Activated naive CD4-positive, alpha-beta T cell treated with anti-CD3 and anti-CD28 coated beads for 36 hours (primary cell): ENCODE measurements at regions of chr19 and their contacts with region 1.

Region 1: DNA sequence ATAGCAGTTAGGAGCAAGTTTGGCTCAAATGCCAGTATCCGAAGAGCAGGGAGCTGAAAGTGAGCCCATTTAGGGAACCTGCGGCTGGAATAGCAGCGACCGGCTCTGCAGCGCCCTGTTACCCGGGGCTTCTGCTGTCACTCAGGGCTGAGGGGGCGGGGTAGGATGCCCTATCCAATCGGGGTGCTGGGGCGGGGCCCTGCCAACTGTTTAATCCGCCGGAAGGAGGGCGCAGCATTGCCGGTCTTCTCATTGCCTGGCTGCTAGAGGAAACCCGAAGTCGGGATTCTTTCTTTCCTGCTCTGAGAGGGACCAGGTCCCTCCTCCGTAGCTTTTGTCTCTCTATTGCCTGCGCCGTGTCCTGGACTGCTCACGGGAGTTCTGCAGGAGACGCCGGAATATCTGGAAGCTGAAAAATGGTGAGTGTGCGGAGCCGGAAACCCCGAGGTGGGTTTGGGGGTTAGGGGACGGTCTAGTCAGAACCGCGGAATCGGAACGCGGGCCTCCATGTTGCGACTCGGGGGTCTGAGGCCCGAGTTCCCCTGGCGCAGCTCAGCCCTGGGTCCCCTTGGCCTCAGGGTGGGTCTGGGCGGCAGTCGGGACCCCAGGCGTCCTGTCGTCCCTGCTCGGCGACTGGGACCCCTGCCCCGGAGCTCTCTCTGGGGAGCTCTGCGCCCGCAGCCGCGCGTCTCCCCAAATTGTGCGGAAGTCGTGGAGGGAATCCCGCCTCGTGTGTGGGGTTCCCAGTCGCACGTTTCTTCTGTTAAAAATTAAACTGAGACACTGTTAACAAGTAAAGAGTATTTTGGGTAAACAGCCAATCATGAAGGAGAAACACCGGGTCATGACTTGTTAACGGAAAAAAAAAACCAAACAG is 22.8 kb downstream of the ZNF763 start:
- DNase-seq: peak; percentile 97
- H3K4me3 Mint-ChIP-seq: peak overlapping the region; percentile 92
- H3K27ac Mint-ChIP-seq: peak overlapping the region; percentile 92
- H3K4me1 Mint-ChIP-seq: peaks cover 22% of the 10 kb centered on the region
- H3K27me3 Mint-ChIP-seq: no peaks in the 10 kb centered on the region

Region 2: GRCh38 chr19:11798391-11799330 is 189.0 kb before region 1 on chr19 and contains the start of gene ZNF491:
- CTCF ChIA-PET with region 1: interaction called, 19 read pairs
- intact Hi-C with region 1: loop called (anchors 1 kb)
- DNase-seq: peak; percentile 95
- H3K4me3 Mint-ChIP-seq: peak within 1 kb of the TSS; percentile 84
- H3K27ac Mint-ChIP-seq: peak within 1 kb of the TSS; percentile 67
- H3K4me1 Mint-ChIP-seq: peaks cover 12% of the 10 kb centered on the region
- H3K27me3 Mint-ChIP-seq: peaks cover 2% of the 10 kb centered on the region
- total RNA-seq, gene ZNF491: 0.35 to 1.2 TPM

Region 3: GRCh38 chr19:11872624-11873023 is 115.0 kb before region 1 on chr19:
- CTCF ChIA-PET with region 1: no interaction called
- intact Hi-C with region 1: no loop called
- DNase-seq: no peak
- H3K4me3 Mint-ChIP-seq: no peak overlapping the region
- H3K27ac Mint-ChIP-seq: no peak overlapping the region
- H3K4me1 Mint-ChIP-seq: no peaks in the 10 kb centered on the region
- H3K27me3 Mint-ChIP-seq: no peaks in the 10 kb centered on the region

Region 4: DNA sequence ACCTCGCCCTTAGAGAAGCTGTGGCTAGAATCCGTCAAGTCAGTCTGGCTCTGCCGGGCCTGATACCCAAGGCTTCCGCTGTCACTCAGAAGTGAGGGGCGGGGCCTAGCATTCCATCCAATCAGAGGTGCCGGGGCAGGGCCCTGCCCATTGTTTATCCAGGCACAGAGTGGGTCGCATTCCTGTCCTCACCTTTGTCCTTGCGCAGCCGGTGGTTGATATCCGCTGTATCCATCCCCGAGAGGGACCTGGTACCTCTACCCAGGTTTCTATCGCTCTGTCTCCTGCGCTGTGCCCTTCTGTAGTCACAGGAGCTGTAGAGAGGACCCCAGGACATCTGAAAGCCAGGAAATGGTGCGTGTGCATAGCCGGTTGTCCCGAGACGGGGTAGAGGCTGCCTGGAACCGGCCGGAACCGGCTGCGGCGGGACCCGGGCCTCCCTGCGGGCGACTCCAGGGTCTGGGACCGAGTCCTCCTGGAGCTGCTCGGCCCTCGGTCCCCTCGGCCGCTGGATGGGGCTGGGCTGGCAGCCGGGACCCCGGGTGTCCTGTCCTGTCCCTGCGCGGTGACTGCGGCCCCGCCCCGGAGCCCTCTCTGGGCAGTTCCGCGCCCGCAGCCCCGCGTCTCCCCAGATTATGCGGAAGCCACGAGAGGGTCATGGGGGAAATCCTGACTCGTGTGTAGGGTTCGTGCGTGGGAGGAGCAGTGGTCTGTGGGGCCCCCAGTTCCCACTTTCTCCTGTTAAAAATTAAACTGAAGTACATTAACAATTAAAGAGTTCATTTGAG is 22.6 kb before region 1 on chr19 and contains the start of gene ZNF763:
- CTCF ChIA-PET with region 1: interaction called, 45 read pairs
- intact Hi-C with region 1: loop called (anchors 1 kb)
- DNase-seq: peak; percentile 95
- H3K4me3 Mint-ChIP-seq: peak within 1 kb of the TSS; percentile 86
- H3K27ac Mint-ChIP-seq: peak within 1 kb of the TSS; percentile 85
- H3K4me1 Mint-ChIP-seq: peaks cover 20% of the 10 kb centered on the region
- H3K27me3 Mint-ChIP-seq: no peaks in the 10 kb centered on the region
- total RNA-seq, gene ZNF763: 0.50 to 0.54 TPM

Region 5: DNA sequence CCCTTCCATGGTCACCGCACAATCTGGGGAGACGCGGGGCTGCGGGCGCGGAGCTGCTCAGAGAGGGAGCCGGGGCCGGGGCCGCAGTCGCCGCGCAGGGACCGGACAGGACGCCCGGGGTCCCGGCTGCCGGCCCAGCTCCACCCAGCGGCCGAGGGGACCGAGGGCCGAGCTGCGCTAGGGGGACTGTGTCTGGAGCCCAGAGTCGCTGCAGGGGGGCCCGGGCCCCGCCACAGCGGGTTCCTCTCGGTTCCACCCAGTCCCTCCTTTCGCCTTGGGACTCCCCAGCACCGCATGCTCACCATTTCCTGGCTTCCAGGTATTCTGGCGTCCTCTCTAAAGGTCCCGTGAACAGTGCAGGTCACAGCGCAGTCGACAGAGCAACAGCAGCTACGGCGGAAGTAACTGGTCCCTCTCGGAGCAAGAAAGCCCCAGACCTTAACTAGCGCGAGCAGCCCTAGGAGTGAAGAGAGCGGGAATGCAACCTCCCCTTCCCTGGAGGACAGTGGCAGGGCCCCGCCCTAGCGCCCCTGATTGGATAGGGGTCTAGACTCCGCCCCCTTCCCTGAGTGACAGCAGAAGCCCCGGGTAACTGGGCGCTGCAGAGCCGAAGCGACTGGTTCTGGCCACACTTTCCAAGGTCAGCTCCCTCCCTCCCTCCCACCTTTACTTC is 65.0 kb after region 1 on chr19 and contains the start of gene ZNF878:
- CTCF ChIA-PET with region 1: interaction called, 4 read pairs
- intact Hi-C with region 1: loop called (anchors 2 kb)
- DNase-seq: peak; percentile 80
- H3K4me3 Mint-ChIP-seq: peak within 1 kb of the TSS; percentile 80
- H3K27ac Mint-ChIP-seq: no peak within 1 kb of the TSS
- H3K4me1 Mint-ChIP-seq: peaks cover 9% of the 10 kb centered on the region
- H3K27me3 Mint-ChIP-seq: peaks cover 19% of the 10 kb centered on the region
- total RNA-seq, gene ZNF878: 0.38 to 0.49 TPM

Region 6: GRCh38 chr19:12139885-12140547 is 152.4 kb after region 1 on chr19 and contains the start of gene ZNF20:
- CTCF ChIA-PET with region 1: interaction called, 5 read pairs
- intact Hi-C with region 1: loop called (anchors 1 kb)
- DNase-seq: peak; percentile 95
- H3K4me3 Mint-ChIP-seq: peak within 1 kb of the TSS; percentile 92
- H3K27ac Mint-ChIP-seq: peak within 1 kb of the TSS; percentile 65
- H3K4me1 Mint-ChIP-seq: peaks cover 32% of the 10 kb centered on the region
- H3K27me3 Mint-ChIP-seq: no peaks in the 10 kb centered on the region
- total RNA-seq, gene ZNF20: 2.1 to 3.1 TPM